ENCODE measurements at regions of chr6 and their contacts with region 1.

Region 1: GRCh38 chr6:2848851-2849250 is 7.2 kb upstream of the SERPINB1 start:
- DNase-seq: no peak
- H3K4me3 ChIP-seq: no peak overlapping the region
- CTCF ChIP-seq: no peak

Region 2: DNA sequence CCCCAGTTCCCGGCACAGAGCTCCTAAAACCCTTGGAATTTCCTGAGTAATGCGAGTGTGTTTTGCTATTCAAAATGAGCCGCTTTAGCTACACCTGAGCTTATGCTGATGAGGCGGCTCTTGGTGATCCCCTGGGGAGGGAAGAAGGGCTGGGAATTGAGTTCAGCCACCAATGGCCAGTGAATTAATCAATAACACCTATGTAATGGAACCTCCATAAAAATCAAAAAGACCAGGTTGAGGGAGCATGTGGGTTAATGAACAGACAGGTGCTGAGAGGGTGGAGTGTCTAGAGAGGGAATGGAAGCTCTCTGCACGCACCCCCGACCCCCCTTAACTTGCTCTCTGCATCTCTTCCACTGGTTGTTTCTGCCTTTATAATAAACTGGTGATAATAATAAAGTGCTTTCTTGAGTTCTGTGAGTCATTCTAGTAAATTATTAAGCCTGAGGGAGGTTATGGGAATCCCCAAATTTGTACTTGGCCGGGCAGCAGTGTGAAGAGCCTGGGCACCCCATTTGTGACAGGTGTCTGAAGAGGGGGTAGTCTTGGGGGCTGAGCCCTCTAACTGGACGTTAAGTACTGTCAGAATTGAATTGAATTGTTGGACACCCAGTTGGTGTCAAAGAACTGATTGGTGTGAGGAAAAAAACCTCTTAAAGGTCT is 17.5 kb after region 1 on chr6:
- CTCF ChIA-PET with region 1: interaction called, 48 read pairs
- POLR2A ChIA-PET with region 1: no interaction called
- DNase-seq: no peak
- H3K4me3 ChIP-seq: no peak overlapping the region
- CTCF ChIP-seq: no peak

Region 3: GRCh38 chr6:2917065-2917464 is 68.2 kb after region 1 on chr6:
- CTCF ChIA-PET with region 1: interaction called, 10 read pairs
- POLR2A ChIA-PET with region 1: no interaction called
- DNase-seq: no peak
- H3K4me3 ChIP-seq: no peak overlapping the region
- CTCF ChIP-seq: no peak

Region 4: DNA sequence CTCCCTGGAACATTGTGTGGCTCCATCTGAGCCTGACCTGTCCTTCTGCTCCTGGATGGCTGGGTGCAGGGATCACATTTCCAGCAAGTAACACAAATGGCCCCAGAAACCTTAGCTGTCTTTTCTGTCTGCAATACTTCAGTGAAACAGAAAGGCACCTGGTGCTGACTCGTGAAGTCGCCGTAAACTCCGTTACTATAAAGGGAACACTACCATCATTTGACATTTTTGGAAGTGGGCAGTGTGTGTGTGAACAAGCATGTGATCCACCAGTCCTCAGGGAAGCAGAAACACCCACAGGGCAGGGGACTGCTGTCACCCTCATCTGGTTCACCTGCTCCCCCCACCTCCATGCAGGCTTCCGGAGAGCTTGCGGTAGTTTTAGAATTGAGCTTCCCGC is 98.6 kb after region 1 on chr6:
- CTCF ChIA-PET with region 1: interaction called, 37 read pairs
- POLR2A ChIA-PET with region 1: no interaction called
- DNase-seq: no peak
- H3K4me3 ChIP-seq: no peak overlapping the region
- CTCF ChIP-seq: no peak

Measured in AG04449 (cell line).